Naive thymus-derived CD4-positive, alpha-beta T cell (primary cell): ENCODE measurements at regions of chr11 and their contacts with region 1.

Region 1: GRCh38 chr11:66136752-66137123 is 66.7 kb downstream of the PACS1 start:
- DNase-seq: no peak
- ATAC-seq: no peak
- H3K4me3 ChIP-seq: no peak overlapping the region
- H3K4me3 Mint-ChIP-seq: no peak overlapping the region
- H3K27ac ChIP-seq: no peak overlapping the region
- H3K27ac Mint-ChIP-seq: peak overlapping the region in 5 of 9 donors; percentile 6 to 75 (median 23)
- H3K4me1 ChIP-seq: peaks cover 0 to 4% of the 10 kb centered on the region in 2 donors
- H3K4me1 Mint-ChIP-seq: peaks cover 24 to 76% (median 65%) of the 10 kb centered on the region in 7 donors
- H3K27me3 ChIP-seq: no peaks in the 10 kb centered on the region
- H3K27me3 Mint-ChIP-seq: no peaks in the 10 kb centered on the region

Region 2: GRCh38 chr11:66022401-66023185 is 114.1 kb before region 1 on chr11:
- CTCF ChIA-PET with region 1: interaction called, 3 read pairs
- POLR2A ChIA-PET with region 1: no interaction called
- intact Hi-C with region 1: loop called in 1 of 2 experiments (anchors 1 kb)
- DNase-seq: peak; percentile 52 to 89 (median 69)
- ATAC-seq: peak; percentile 92
- H3K4me3 ChIP-seq: peak overlapping the region; percentile 39
- H3K4me3 Mint-ChIP-seq: peak overlapping the region in 9 of 10 donors; percentile 4 to 73 (median 45)
- H3K27ac ChIP-seq: no peak overlapping the region
- H3K27ac Mint-ChIP-seq: peak overlapping the region in 1 of 9 donors; percentile 59
- H3K4me1 ChIP-seq: peaks cover 0 to 5% of the 10 kb centered on the region in 2 donors
- H3K4me1 Mint-ChIP-seq: peaks cover 4 to 17% (median 5%) of the 10 kb centered on the region in 7 donors
- H3K27me3 ChIP-seq: no peaks in the 10 kb centered on the region
- H3K27me3 Mint-ChIP-seq: peaks cover 0 to 9% (median 4%) of the 10 kb centered on the region in 5 donors

Region 3: DNA sequence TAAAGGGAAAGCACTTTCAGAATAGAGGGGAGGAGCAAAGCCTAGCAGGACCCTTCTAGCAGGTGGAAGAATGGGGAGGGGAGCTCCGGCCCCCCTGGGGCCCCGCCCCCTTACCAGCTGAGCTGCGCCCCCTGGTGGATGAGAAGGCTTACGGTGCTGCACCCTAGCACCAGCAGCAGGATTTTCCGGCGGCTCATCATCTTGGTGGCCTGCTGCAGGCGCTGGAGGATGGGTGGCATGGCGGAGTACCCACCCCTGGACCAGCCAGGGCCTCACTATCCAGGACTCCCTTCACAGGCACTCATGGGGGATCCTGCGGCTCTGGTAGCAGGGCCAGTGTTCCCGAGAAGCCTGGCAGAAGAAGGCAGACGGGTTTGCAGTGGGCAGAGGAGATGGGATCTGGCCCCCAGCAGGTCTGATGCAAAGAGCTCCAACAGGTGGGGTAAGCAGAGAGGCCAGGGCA is 91.5 kb before region 1 on chr11:
- CTCF ChIA-PET with region 1: interaction called, 30 read pairs
- POLR2A ChIA-PET with region 1: interaction called, 4 read pairs
- intact Hi-C with region 1: loop called in 1 of 2 experiments (anchors 1 kb)
- DNase-seq: peak; percentile 70 to 89 (median 81)
- ATAC-seq: peak; percentile 98
- H3K4me3 ChIP-seq: no peak overlapping the region
- H3K4me3 Mint-ChIP-seq: peak overlapping the region in 3 of 10 donors; percentile 12 to 29 (median 17)
- H3K27ac ChIP-seq: no peak overlapping the region
- H3K27ac Mint-ChIP-seq: peak overlapping the region in 2 of 9 donors; percentile 17 to 34
- H3K4me1 ChIP-seq: peaks cover 0 to 9% of the 10 kb centered on the region in 2 donors
- H3K4me1 Mint-ChIP-seq: peaks cover 4 to 23% (median 15%) of the 10 kb centered on the region in 7 donors
- H3K27me3 ChIP-seq: no peaks in the 10 kb centered on the region
- H3K27me3 Mint-ChIP-seq: peaks cover 0 to 19% (median 0%) of the 10 kb centered on the region in 5 donors